ENCODE measurements at regions of chr19 and their contacts with region 1.

Region 1: DNA sequence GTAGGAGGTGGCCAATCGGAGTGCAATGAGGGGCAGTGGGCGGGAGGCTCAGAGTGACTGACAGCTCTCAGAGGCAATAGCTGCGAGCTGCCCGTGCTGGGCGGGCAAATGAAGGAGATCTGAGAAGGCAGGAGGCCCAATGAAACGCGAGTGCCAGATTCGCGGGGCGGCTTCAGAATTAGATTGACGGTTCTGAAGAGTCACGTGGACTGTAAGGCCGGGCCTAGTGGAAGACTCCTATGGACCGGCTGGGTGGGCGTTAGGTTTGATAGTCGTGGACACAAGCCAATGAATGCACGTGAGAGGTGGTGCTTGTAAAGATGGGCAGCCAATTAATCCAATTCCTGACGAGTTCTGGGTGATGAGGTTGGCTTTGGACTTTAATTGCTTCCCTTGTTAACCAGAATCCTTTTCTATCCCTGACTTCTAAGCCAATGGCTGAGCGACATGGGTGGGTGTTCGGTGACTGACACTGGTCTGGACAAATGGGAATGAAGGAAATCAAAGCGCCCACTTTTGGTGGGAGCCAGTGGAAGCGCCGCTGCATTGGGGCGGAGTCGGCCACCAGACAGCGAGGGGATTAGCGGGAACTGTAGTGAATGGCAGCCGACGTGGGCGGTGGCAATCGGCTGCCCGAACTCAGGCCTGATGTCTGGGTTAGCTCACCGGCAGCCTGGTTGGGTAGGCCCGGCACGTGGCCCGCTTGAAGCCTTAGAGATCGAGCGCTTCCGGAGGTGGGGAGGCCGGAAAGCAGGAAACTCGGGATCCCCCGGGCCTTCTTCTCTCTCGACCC is 524 bp upstream of the KHSRP start:
- DNase-seq: peak; percentile 99 to 100
- ATAC-seq: peak; percentile 97
- H3K4me3 ChIP-seq: no peak overlapping the region
- H3K27ac ChIP-seq: peak overlapping the region in 1 of 2 donors; percentile 34
- H3K4me1 ChIP-seq: no peaks in the 10 kb centered on the region
- H3K27me3 ChIP-seq: no peaks in the 10 kb centered on the region

Region 2: DNA sequence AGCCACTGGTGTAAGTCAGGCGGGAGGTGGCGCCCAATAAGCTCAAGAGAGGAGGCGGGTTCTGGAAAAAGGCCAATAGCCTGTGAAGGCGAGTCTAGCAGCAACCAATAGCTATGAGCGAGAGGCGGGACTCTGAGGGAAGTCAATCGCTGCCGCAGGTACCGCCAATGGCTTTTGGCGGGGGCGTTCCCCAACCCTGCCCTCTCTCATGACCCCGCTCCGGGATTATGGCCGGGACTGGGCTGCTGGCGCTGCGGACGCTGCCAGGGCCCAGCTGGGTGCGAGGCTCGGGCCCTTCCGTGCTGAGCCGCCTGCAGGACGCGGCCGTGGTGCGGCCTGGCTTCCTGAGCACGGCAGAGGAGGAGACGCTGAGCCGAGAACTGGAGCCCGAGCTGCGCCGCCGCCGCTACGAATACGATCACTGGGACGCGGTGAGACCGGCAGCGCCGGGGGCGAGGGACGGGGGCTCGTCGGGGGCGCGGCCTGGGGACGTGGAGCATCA is 52.5 kb before region 1 on chr19 and contains the start of gene ALKBH7:
- intact Hi-C with region 1: loop called in 1 of 2 experiments (anchors 2 kb)
- DNase-seq: peak; percentile 97 to 100
- ATAC-seq: peak; percentile 94
- H3K4me3 ChIP-seq: peak within 1 kb of the TSS; percentile 30 to 52
- H3K27ac ChIP-seq: peak within 1 kb of the TSS; percentile 85 to 95
- H3K4me1 ChIP-seq: no peaks in the 10 kb centered on the region
- H3K27me3 ChIP-seq: no peaks in the 10 kb centered on the region
- total RNA-seq, gene ALKBH7: 36.5 to 44.6 TPM

Region 3: DNA sequence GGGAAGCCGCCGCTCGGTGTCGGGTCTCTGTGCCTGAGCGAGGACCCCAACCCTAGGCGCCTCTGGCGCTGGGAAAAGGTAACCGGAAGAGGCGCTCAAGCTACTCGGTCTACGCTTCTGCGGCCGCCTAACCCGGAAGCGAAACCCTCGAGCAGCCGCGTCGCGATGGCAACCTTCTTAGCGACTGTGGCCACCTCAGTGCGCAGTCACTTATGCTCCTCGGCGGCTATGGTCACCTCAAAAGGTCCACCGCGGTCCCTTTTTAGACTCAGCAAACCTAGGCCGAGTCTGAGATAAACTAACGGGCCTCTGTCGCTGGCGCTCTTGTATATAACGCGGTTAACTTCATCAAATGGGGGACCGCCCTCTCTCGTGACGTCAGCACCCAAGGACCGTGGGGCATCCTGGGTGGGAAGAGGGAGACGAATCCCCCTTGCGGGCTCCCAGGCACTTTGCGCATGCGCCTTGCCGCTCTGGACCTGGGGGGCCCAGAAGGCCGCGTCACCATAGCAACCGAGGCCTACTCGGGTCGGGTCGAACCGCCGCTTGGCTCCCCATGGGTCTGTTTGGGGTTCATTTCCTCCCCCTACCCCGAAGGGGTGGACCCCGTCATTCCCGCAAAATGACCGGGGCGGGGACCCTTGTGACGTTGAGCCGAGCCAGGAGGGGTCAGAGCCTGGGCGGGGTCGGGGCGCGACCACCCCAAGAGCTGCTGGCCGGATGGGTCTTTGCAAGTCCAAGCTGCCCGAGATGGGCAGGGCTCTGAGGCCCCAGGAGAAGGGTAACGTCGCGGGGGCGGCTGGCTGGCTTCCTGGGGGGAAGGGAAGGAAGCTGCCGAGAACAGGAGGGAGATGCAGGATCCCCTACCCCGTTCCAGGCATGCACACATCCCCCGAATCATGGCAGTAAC is 31.8 kb before region 1 on chr19 and contains the start of gene GTF2F1:
- intact Hi-C with region 1: loop called in 1 of 2 experiments (anchors 1 kb)
- DNase-seq: peak; percentile 97 to 99
- ATAC-seq: peak; percentile 97
- H3K4me3 ChIP-seq: peak within 1 kb of the TSS; percentile 53 to 88
- H3K27ac ChIP-seq: peak within 1 kb of the TSS; percentile 18 to 94
- H3K4me1 ChIP-seq: peaks cover 0 to 4% of the 10 kb centered on the region in 2 donors
- H3K27me3 ChIP-seq: no peaks in the 10 kb centered on the region
- total RNA-seq, gene GTF2F1: 35.7 to 45.2 TPM

Region 4: DNA sequence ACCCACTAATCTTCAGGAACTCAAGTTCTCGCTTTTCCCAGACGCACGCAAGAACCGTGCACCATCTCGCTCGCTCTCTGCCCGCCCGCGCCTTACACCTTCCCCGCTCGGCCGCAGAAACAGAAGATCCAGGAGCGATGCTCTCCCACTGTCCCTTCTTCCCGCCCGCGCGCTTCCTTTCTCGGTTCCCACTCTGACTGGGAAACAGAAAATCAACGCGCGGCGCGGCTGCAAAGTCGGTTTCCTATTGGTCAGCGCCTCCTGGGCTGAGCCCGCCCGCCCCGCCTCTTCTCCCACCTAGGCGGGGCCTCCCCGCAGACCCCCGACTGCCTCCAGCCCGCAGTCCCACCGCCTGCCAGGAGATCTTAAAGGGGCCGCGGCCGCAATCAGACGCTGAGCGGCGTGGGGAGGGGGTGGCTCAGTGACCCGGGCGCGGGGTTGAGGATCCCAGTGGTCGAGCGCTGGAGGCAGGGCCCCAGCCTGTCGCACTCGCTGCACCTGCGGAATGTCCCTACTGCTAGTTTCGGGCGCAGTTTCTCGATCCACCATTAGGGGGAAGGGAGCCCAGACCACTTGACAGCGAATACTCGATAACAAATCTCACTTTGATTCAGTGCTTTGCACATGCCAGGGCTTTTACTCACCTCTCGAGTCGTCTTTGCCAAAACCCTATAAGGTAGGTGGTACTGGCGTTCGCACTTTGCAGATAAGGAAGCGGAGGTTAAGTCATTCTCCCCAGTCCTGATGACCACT is 35.1 kb after region 1 on chr19:
- intact Hi-C with region 1: loop called in 1 of 2 experiments (anchors 2 kb)
- DNase-seq: peak; percentile 98 to 99
- ATAC-seq: peak; percentile 97
- H3K4me3 ChIP-seq: peak overlapping the region; percentile 78 to 86
- H3K27ac ChIP-seq: peak overlapping the region in 1 of 2 donors; percentile 41
- H3K4me1 ChIP-seq: no peaks in the 10 kb centered on the region
- H3K27me3 ChIP-seq: no peaks in the 10 kb centered on the region

Measured in aorta (tissue), 5 donors.